ENCODE measurements at regions of chr7 and their contacts with region 1.

Region 1: DNA sequence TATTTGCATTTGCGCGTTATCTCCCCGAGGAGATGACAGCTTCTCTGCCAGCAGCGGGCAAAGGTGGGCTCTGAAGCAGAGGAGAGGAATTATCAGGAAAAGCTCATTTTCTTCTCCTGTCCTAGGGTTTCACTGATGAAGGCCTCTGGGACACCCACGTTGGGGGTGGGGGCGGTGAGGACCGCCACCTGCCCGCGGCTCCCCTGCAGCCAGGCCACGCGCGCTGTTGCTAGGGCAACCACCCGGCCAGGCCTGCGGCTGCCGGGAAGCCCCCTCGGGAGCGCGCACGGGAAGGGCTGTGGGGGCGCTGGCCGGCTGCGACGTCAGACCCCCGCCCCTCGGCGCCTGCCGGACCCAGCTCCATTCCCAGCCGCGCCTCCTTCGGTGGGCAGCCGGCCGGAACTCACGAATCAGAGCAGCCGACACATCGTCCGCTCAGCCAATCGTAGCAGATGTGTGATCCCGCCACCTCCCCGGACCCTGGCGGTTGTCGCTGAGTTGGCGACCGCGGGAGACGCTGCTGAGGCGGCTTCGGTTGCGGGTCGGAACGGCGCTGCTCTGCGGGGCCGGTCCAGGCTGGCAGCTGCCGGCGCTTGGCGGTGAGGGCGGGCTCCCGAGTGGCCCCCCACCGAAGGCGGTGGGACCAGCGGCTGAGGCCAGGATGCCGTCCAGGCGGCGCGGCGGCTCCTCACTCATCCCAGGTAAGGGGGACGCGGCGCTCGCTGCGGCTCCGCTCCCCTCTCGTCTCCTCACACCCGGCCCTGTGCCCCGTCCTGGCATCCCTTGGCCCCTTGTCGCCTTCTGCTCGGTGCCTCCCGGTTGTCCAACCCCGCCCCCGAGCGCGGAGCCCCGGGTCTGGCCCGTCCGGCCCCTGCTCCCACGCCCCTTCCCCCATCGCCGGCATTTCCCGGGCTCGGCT is at the start of gene TPST1:
- DNase-seq: peak; percentile 95
- H3K4me3 ChIP-seq: peak within 1 kb of the TSS; percentile 68 to 91 (median 88)
- H3K27ac ChIP-seq: peak within 1 kb of the TSS; percentile 72 to 80 (median 74)
- H3K4me1 ChIP-seq: peaks cover 0 to 12% (median 10%) of the 10 kb centered on the region in 4 donors
- H3K27me3 ChIP-seq: no peaks in the 10 kb centered on the region
- CTCF ChIP-seq: peak; percentile 33 to 49 (median 40)
- EP300 ChIP-seq: no peak
- POLR2A ChIP-seq: peak; percentile 41 to 43
- total RNA-seq, gene TPST1: 21.0 to 31.3 (median 26.4) TPM

Region 2: DNA sequence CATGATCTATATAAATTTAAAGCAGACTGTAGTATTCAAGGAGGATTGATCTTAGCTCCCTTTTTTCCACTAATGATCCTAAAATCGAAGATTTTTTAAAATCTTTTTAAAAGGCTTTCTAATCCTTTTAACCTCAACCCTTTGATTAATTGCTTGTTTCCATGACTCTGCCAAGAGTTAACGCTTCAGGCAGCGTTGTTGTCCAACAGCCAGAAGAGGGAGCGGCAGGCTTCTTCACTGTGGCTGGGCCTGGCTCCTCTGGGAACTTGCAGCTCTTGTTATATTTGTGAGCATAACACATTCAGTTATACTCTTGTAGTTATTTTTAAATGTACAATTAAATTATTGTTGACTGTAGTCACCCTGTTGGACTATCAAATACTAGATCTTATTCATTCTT is 64.2 kb before region 1 on chr7:
- intact Hi-C with region 1: loop called (anchors 2 kb)
- DNase-seq: peak; percentile 92
- H3K4me3 ChIP-seq: no peak overlapping the region
- H3K27ac ChIP-seq: peak overlapping the region; percentile 58 to 75 (median 60)
- H3K4me1 ChIP-seq: peaks cover 0 to 23% (median 14%) of the 10 kb centered on the region in 4 donors
- H3K27me3 ChIP-seq: no peaks in the 10 kb centered on the region
- CTCF ChIP-seq: peak in 2 of 4 experiments; percentile 50 to 54
- EP300 ChIP-seq: no peak
- POLR2A ChIP-seq: no peak

Region 3: GRCh38 chr7:66265566-66265965 is 60.5 kb after region 1 on chr7:
- intact Hi-C with region 1: loop called (anchors 5 kb)
- DNase-seq: no peak
- H3K4me3 ChIP-seq: no peak overlapping the region
- H3K27ac ChIP-seq: no peak overlapping the region
- H3K4me1 ChIP-seq: peaks cover 0 to 17% (median 8%) of the 10 kb centered on the region in 4 donors
- H3K27me3 ChIP-seq: no peaks in the 10 kb centered on the region
- CTCF ChIP-seq: no peak
- EP300 ChIP-seq: no peak
- POLR2A ChIP-seq: no peak

Region 4: GRCh38 chr7:66281678-66282590 is 76.9 kb after region 1 on chr7:
- intact Hi-C with region 1: loop called (anchors 5 kb)
- DNase-seq: peak; percentile 72
- H3K4me3 ChIP-seq: no peak overlapping the region
- H3K27ac ChIP-seq: peak overlapping the region; percentile 49 to 79 (median 66)
- H3K4me1 ChIP-seq: peaks cover 0 to 25% (median 19%) of the 10 kb centered on the region in 4 donors
- H3K27me3 ChIP-seq: no peaks in the 10 kb centered on the region
- CTCF ChIP-seq: no peak
- EP300 ChIP-seq: no peak
- POLR2A ChIP-seq: no peak

Region 5: DNA sequence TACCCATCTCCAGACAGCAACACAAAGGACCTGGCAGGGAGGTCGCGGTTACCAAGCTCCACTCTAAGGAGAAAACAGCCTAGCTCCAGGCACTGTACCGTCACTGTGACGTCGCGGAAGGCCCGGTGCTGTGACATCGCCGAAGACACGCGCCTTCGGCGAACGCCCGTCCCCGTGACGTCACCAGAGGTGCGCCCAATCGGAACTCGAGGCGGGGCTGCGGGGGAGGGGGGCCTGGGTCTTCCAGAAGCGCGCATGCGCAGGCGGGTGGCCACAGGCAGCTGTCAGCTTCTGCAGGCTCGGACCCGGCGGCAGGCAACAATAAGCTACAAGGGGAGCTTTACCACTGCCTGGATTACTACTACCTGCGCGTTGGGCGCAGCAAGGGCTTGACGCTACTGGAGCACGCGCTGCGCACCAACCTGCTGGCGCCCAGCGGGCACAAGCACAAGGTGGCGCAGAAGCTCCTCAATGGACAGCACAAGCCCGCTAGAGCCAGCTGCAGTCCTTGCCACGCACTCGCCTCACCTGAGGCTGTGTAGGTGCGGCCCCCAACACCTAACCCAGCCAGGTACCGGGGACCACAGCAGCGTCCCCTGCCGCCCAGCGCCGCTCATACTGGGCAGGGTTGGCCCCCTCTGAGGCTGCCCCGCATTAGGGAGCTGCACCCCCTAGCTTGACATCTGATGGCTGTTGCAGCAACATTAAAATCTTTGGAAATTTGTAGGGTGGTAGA is 208.5 kb after region 1 on chr7:
- intact Hi-C with region 1: loop called (anchors 5 kb)
- DNase-seq: peak; percentile 90
- H3K4me3 ChIP-seq: peak overlapping the region; percentile 33 to 56 (median 44)
- H3K27ac ChIP-seq: peak overlapping the region in 2 of 4 donors; percentile 20 to 44
- H3K4me1 ChIP-seq: peaks cover 0 to 13% (median 10%) of the 10 kb centered on the region in 4 donors
- H3K27me3 ChIP-seq: no peaks in the 10 kb centered on the region
- CTCF ChIP-seq: peak; percentile 6 to 31 (median 21)
- EP300 ChIP-seq: no peak
- POLR2A ChIP-seq: no peak

Region 6: GRCh38 chr7:66493235-66494181 is 288.4 kb after region 1 on chr7:
- intact Hi-C with region 1: loop called (anchors 5 kb)
- DNase-seq: peak; percentile 99
- H3K4me3 ChIP-seq: peak overlapping the region; percentile 62 to 78 (median 76)
- H3K27ac ChIP-seq: peak overlapping the region; percentile 82 to 96 (median 91)
- H3K4me1 ChIP-seq: peaks cover 0 to 17% (median 15%) of the 10 kb centered on the region in 4 donors
- H3K27me3 ChIP-seq: no peaks in the 10 kb centered on the region
- CTCF ChIP-seq: peak in 3 of 4 experiments; percentile 34 to 47 (median 40)
- EP300 ChIP-seq: peak in 1 of 4 donors; percentile 34
- POLR2A ChIP-seq: peak; percentile 92

Region 7: GRCh38 chr7:66576646-66577045 is 371.6 kb after region 1 on chr7:
- intact Hi-C with region 1: no loop called
- DNase-seq: no peak
- H3K4me3 ChIP-seq: no peak overlapping the region
- H3K27ac ChIP-seq: no peak overlapping the region
- H3K4me1 ChIP-seq: peaks cover 0 to 14% (median 5%) of the 10 kb centered on the region in 4 donors
- H3K27me3 ChIP-seq: no peaks in the 10 kb centered on the region
- CTCF ChIP-seq: no peak
- EP300 ChIP-seq: no peak
- POLR2A ChIP-seq: no peak